HAP-1 (cell line): ENCODE measurements at regions of chr17 and their contacts with region 1.

Region 1: DNA sequence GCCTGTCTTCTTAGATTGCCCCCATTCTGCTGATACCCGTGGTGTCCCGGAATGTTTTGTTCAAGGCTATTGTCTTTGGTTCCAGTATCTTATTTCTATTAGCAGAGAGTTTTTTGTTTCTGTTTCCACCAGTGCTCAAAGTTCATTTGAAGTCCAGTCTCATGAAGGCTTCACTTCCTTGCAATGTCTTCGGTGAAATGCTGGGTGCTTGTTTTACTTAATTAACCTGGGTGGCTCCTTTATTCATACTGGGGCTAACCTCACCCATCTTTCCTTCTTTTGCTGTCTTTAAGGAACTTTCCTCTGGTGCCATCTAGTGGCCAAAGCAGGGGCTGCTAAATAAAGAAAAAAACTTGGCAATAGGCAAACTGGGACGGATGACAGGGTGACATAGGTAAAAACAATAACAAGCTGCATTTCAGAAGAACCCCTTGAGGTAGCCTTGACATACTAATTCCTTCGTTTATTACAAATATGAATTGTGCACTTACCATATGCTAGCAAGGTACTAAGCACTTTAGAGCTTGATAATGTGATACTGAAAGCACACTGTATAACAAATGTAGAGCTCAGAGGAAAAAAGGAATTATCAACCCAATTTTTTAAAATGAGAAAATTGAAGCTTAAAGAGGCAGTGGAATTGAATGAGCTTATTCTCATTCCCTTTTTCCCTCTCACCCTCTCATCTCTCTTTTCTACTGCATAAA is 2.8 kb upstream of the SMIM36 start:
- DNase-seq: peak; percentile 66 to 84
- H3K4me3 ChIP-seq: no peak overlapping the region
- H3K4me1 ChIP-seq: peaks cover 4% of the 10 kb centered on the region; the same call in 1 of the 2 replicates
- H3K27me3 ChIP-seq: peaks cover 9% of the 10 kb centered on the region; the same call in 1 of the 2 replicates

Region 2: GRCh38 chr17:55366020-55366481 is 148.0 kb before region 1 on chr17:
- in situ Hi-C with region 1: loop called (anchors 10 kb)
- DNase-seq: no peak
- H3K4me3 ChIP-seq: no peak overlapping the region
- H3K4me1 ChIP-seq: no peaks in the 10 kb centered on the region
- H3K27me3 ChIP-seq: no peaks in the 10 kb centered on the region

Region 3: DNA sequence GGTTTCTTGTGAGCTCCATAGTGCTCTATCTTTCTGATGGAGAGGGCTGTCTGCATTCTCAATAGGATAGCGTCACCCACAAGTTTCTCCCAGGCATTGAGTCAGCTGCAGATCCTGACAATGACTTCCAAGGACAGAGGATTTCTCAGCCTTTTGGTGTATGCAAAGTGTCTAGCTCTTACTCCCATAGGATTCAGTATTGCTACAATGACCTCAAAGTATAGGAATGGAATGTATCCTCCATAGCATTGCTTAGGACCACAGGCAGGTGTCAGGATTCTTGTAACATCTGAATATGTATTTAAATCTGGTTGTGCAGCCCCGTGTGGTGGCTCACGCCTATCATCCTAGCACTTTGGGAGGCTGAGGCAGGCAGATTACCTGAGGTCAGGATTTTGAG is 35.1 kb before region 1 on chr17:
- in situ Hi-C with region 1: no loop called
- DNase-seq: no peak
- H3K4me3 ChIP-seq: no peak overlapping the region
- H3K4me1 ChIP-seq: peaks cover 20% of the 10 kb centered on the region
- H3K27me3 ChIP-seq: peaks cover 3% of the 10 kb centered on the region; the same call in 1 of the 2 replicates